ENCODE measurements at regions of chr17 and their contacts with region 1.

Region 1: DNA sequence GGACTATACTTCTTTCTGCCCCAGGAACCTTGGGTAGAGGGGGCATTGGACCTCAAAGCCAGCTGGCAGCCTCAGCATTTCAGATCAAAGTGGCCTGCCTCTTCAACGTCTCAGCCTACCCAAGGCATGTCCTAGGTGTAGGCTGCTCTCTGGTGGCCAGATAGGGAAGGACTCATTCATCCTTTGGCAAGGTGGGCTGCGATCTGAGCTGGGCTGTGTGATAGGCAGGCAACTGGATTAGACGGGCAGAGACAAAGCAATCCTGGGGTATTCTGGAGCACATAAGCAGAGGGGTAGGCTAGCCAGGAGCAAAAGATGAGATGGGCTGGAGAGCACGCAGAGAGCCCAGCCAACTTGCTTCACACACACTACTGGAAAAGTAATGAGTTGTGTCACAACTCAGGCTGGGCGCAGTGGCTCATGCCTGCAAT is 8.8 kb upstream of the NAGLU start:
- DNase-seq: peak; percentile 85
- H3K4me3 Mint-ChIP-seq: no peak overlapping the region
- H3K27ac Mint-ChIP-seq: no peak overlapping the region
- H3K4me1 Mint-ChIP-seq: peaks cover 17% of the 10 kb centered on the region
- H3K27me3 Mint-ChIP-seq: no peaks in the 10 kb centered on the region
- CTCF ChIP-seq: peak; percentile 90

Region 2: GRCh38 chr17:42120770-42121769 is 406.2 kb before region 1 on chr17 and contains the start of gene KAT2A:
- CTCF ChIA-PET with region 1: interaction called, 8 read pairs
- POLR2A ChIA-PET with region 1: no interaction called
- intact Hi-C with region 1: loop called (anchors 5 kb)
- DNase-seq: peak; percentile 83
- H3K4me3 Mint-ChIP-seq: peak within 1 kb of the TSS; percentile 53
- H3K27ac Mint-ChIP-seq: no peak within 1 kb of the TSS
- H3K4me1 Mint-ChIP-seq: peaks cover 6% of the 10 kb centered on the region
- H3K27me3 Mint-ChIP-seq: no peaks in the 10 kb centered on the region
- CTCF ChIP-seq: no peak
- total RNA-seq, gene KAT2A: 37.4 and 44.6 TPM in 2 replicates

Region 3: DNA sequence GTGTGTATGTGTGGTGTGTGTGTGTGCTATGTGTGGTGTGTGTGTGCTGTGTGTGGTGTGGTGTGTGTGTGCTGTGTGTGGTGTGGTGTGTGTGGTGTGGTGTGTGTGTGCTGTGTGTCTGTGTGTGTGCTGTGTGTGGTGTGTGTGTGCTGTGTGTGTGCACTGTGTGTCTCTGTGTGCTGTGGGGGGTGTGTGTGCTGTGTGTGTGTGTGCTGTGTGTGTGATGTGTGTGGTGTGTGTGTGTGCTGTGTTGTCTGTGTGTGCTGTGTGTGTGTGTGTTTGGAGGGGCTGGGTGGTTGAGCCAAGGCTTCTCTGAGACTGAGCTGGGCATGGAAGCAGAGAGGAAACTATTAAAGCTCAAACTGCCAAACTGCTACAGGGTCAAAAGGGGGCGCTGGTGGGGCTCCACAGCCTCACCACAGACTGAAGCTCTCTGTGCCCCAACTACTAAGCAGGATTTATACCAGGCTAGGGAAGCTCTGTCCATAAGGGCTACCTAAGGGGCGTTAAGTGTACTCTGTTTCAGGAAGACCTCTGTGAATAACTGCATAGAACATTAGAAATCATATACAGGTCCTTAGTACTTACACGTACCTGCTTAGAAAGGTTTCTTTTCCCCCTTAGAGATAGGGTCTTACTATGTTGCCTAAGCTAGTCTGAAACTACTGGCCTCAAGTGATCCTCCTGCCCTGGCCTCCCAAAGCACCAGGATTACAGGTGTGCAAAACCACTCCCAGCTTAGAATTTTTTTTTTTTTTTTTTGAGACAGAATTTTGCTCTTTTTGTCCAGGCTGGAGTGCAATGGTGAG is 305.1 kb before region 1 on chr17:
- CTCF ChIA-PET with region 1: no interaction called
- POLR2A ChIA-PET with region 1: no interaction called
- intact Hi-C with region 1: loop called (anchors 5 kb)
- DNase-seq: peak; percentile 56
- H3K4me3 Mint-ChIP-seq: no peak overlapping the region
- H3K27ac Mint-ChIP-seq: no peak overlapping the region
- H3K4me1 Mint-ChIP-seq: no peaks in the 10 kb centered on the region
- H3K27me3 Mint-ChIP-seq: no peaks in the 10 kb centered on the region
- CTCF ChIP-seq: peak; percentile 54

Region 4: DNA sequence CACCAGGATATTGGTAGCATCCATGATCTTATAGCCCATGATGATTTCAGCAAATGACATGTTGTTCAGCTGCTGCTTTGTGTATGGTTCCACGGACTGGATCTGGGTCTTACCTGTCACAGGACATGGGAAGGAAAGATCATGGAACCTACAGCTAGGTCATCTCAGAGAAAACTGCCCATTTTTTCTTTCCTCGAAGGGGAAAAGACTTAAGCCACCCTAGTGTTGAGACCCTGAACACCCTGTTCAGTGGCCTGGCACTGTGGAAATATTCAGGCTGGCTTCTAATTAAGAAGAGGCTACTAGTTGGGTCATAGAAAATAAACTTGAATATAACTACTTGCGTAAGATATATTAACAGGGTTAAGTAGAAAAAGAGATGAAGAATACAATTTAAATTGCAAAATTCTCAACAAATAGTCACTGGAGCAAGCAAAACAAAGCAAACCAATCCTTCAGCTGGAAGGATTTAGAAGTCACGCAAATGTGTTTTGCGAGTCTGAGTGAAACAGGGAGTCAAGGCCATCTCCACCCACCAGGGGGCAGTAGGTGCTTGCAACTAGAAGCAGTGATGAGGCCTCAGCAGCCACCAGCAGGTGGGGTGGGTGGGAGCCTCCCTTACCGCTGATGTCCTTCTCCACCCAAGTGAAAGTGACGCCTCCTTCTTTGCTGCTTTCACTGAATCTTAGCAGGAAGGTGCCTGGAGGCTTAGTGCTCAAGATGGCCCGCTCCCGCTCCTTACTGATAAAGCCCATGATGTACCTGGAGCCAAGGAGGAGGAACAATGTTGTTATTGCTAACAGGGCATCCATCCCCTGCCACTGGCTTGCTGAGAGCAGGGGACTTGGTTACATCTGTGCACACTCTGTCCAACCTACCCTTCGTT is 204.7 kb before region 1 on chr17:
- CTCF ChIA-PET with region 1: interaction called, 8 read pairs
- POLR2A ChIA-PET with region 1: interaction called, 3 read pairs
- intact Hi-C with region 1: loop called (anchors 1 kb)
- DNase-seq: peak; percentile 93
- H3K4me3 Mint-ChIP-seq: no peak overlapping the region
- H3K27ac Mint-ChIP-seq: peak overlapping the region; percentile 46
- H3K4me1 Mint-ChIP-seq: peaks cover 11% of the 10 kb centered on the region
- H3K27me3 Mint-ChIP-seq: no peaks in the 10 kb centered on the region
- CTCF ChIP-seq: peak; percentile 99

Measured in MCF 10A (cell line).